Dendritic cell treated with granulocyte-macrophage colony-stimulating factor and Interleukin-4, amounts not matched to agents 40 ng/mL and 50 ng/mL, for 4 days (primary cell): ENCODE measurements at regions of chr16 and their contacts with region 1.

Region 1: GRCh38 chr16:46673320-46674013 is 15.5 kb downstream of the VPS35 start:
- H3K4me3 Mint-ChIP-seq: no peak overlapping the region
- H3K27ac Mint-ChIP-seq: no peak overlapping the region
- H3K4me1 Mint-ChIP-seq: peaks cover 8% of the 10 kb centered on the region
- H3K27me3 Mint-ChIP-seq: no peaks in the 10 kb centered on the region

Region 2: GRCh38 chr16:46801428-46802049 is 128.1 kb after region 1 on chr16:
- intact Hi-C with region 1: loop called (anchors 1 kb)
- H3K4me3 Mint-ChIP-seq: no peak overlapping the region
- H3K27ac Mint-ChIP-seq: no peak overlapping the region
- H3K4me1 Mint-ChIP-seq: peaks cover 5% of the 10 kb centered on the region
- H3K27me3 Mint-ChIP-seq: no peaks in the 10 kb centered on the region